ENCODE measurements at regions of chr5 and their contacts with region 1.

Region 1: DNA sequence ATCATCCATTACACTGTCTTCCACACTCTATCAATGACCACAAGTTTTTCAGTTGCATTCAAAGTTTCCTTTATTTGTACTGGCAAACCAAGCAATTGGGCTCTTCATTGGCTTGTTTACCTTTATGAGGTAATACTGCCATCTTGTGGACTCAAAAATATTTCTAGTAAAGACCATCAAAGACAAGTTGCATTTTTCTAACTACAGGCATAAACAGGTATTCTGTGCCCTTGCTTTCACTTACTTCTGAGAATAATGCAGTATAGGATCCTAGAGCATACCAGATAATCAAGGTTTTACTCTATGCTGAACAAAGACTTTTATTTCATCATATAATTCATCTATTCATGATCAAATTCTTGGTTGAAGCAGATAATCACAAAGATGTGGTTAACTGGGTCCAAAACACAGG is 173.7 kb upstream of the POU5F2 start:
- H3K4me3 Mint-ChIP-seq: no peak overlapping the region
- H3K27ac Mint-ChIP-seq: no peak overlapping the region
- H3K4me1 Mint-ChIP-seq: no peaks in the 10 kb centered on the region
- H3K27me3 Mint-ChIP-seq: no peaks in the 10 kb centered on the region

Region 2: DNA sequence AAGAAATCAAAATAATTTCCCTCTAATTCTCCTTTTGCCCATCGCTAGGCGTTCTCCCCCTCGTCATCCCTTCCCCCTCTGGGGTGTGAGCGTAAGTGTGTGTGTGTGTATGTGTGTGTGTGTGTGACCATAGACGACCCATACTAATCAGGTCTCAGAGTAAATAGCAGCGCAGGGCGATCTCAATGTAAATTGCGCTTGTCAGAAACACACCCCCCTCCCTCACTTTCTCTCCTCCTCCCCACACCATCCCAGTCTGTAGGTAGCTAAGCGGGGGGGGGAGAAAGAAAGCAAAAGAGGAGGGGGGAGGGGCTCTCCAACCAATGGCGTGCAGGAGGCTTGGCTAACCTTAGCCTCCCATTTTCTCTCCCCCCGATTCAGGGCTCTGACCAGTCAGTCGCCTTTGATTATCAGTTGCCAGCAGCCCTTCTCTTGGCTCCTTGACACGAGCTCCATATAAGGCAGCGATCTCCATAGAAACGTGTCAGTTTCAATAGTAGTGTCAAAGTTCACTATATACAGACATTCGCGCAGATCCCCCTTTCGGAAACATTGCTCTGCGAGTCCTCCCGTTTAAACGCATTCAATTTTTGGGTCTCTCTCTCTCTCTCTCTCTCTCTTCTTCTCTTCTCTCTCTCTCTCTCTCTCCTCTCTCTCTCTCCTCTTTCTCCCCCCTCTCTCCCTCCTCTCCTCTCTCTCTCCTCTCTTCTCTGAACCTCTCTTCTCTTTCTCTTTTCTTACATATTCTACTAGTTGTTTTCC is 332.3 kb before region 1 on chr5 and contains the start of gene NR2F1:
- intact Hi-C with region 1: loop called (anchors 5 kb)
- H3K4me3 Mint-ChIP-seq: peak within 1 kb of the TSS; percentile 73
- H3K27ac Mint-ChIP-seq: no peak within 1 kb of the TSS
- H3K4me1 Mint-ChIP-seq: peaks cover 42% of the 10 kb centered on the region
- H3K27me3 Mint-ChIP-seq: peaks cover 22% of the 10 kb centered on the region

Region 3: GRCh38 chr5:93850311-93850710 is 64.8 kb before region 1 on chr5:
- intact Hi-C with region 1: no loop called
- H3K4me3 Mint-ChIP-seq: no peak overlapping the region
- H3K27ac Mint-ChIP-seq: no peak overlapping the region
- H3K4me1 Mint-ChIP-seq: no peaks in the 10 kb centered on the region
- H3K27me3 Mint-ChIP-seq: no peaks in the 10 kb centered on the region

Region 4: GRCh38 chr5:94693043-94693822 is 778.1 kb after region 1 on chr5:
- intact Hi-C with region 1: loop called (anchors 10 kb)
- H3K4me3 Mint-ChIP-seq: no peak overlapping the region
- H3K27ac Mint-ChIP-seq: no peak overlapping the region
- H3K4me1 Mint-ChIP-seq: no peaks in the 10 kb centered on the region
- H3K27me3 Mint-ChIP-seq: no peaks in the 10 kb centered on the region